Vagina (tissue), 2 donors: ENCODE measurements at regions of chr18 and their contacts with region 1.

Region 1: GRCh38 chr18:71643822-71644221 is 900.3 kb downstream of the CBLN2 start:
- DNase-seq: no peak
- H3K4me3 ChIP-seq: no peak overlapping the region
- H3K27ac ChIP-seq: no peak overlapping the region
- H3K4me1 ChIP-seq: no peaks in the 10 kb centered on the region
- H3K27me3 ChIP-seq: no peaks in the 10 kb centered on the region
- CTCF ChIP-seq: no peak
- POLR2A ChIP-seq: no peak

Region 2: DNA sequence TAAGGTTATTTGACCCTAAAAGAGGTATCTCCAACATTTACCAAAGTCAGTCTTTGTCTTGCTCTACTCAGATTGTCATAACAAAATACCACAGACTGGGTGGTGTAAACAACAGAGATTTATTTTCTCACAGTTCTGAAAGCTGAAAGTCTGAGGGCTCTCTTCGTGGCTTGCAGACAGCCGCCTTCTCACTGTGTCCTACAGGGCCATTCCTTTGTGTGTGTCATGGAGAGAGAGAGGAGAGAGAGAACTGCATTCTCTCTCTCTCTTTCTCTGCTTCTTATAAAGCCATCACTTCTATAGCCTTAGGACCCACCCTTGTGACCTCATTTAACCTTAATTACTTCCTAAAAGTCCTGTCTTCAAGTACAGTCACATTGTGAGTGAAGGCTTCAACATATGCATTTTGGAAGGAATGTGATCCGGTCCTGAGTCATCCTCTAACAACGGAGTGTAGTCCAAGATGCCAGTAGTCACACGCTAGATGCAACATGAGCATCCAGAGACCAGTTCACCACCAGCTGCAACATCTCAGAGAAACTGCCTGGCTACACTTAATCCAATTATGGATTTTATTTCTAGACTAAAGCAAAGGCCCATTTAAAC is 1826.4 kb before region 1 on chr18:
- intact Hi-C with region 1: loop called (anchors 5 kb)
- DNase-seq: no peak
- H3K4me3 ChIP-seq: no peak overlapping the region
- H3K27ac ChIP-seq: no peak overlapping the region
- H3K4me1 ChIP-seq: no peaks in the 10 kb centered on the region
- H3K27me3 ChIP-seq: no peaks in the 10 kb centered on the region
- CTCF ChIP-seq: no peak
- POLR2A ChIP-seq: no peak